CD8-positive, alpha-beta T cell (primary cell): ENCODE measurements at regions of chr15 and their contacts with region 1.

Region 1: GRCh38 chr15:31265871-31266711 is 60.5 kb upstream of the KLF13 start:
- DNase-seq: peak; percentile 51 to 90 (median 77)
- ATAC-seq: peak; percentile 81
- H3K4me3 ChIP-seq: peak overlapping the region in 1 of 2 experiments; percentile 42
- H3K4me3 Mint-ChIP-seq: peak overlapping the region; percentile 71
- H3K27ac ChIP-seq: peak overlapping the region; percentile 71 to 72
- H3K27ac Mint-ChIP-seq: peak overlapping the region; percentile 95
- H3K4me1 ChIP-seq: peaks cover 69% of the 10 kb centered on the region
- H3K4me1 Mint-ChIP-seq: peaks cover 96% of the 10 kb centered on the region
- H3K27me3 ChIP-seq: no peaks in the 10 kb centered on the region
- H3K27me3 Mint-ChIP-seq: no peaks in the 10 kb centered on the region
- CTCF ChIP-seq: no peak

Region 2: DNA sequence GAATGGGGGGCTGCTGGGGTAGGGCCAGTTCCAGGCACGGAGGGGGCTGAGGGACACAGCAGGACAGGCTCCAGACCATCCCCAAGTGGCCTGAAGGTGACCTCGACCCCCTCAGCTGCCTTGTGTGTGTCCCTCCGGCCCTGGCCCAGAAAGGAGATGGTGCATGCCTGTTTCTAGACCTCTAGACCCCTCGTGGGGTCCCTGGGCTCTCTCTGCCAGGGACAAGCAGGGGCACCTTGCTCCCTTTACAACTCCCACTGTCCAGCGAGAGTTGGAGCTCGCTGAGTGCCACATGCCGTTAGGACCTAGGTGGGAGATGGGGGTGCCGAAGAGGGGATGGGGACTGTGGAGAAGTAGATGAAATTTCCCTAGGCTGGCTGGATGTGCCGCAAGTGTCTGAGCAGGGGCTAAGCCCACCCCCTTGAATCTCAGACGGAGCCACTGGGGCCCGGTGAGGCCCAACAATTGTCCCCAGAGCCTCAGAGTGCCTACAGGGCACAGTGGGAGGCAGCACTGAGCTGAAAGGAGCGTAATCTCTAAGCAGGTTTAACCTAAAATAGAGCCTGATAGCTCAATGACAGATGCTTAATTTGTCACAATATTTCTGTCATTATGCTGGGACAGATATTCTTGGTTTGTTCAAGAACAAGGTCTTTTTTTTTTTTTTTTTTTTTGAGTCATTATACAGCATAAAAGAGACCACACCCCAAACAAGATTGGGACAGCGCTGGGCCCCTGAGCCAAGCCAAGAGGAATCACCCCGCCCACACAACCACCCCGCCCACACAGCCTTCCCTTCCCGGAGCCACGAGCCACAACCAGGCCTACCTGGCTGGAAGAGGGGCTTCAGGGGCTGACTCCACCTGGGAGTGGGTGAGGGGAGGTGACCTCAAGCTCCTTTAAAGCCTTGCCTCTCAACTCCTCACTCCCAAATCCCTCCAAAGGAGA is 37.0 kb after region 1 on chr15:
- CTCF ChIA-PET with region 1: no interaction called
- POLR2A ChIA-PET with region 1: interaction called, 5 read pairs
- intact Hi-C with region 1: loop called (anchors 5 kb)
- DNase-seq: peak in 4 of 9 experiments; percentile 13 to 52 (median 45)
- ATAC-seq: peak; percentile 69
- H3K4me3 ChIP-seq: no peak overlapping the region
- H3K4me3 Mint-ChIP-seq: no peak overlapping the region
- H3K27ac ChIP-seq: no peak overlapping the region
- H3K27ac Mint-ChIP-seq: no peak overlapping the region
- H3K4me1 ChIP-seq: peaks cover 26% of the 10 kb centered on the region
- H3K4me1 Mint-ChIP-seq: peaks cover 35% of the 10 kb centered on the region
- H3K27me3 ChIP-seq: peaks cover 0 to 3% of the 10 kb centered on the region in 2 experiments
- H3K27me3 Mint-ChIP-seq: no peaks in the 10 kb centered on the region
- CTCF ChIP-seq: no peak